ENCODE measurements at regions of chr17 and their contacts with region 1.

Region 1: DNA sequence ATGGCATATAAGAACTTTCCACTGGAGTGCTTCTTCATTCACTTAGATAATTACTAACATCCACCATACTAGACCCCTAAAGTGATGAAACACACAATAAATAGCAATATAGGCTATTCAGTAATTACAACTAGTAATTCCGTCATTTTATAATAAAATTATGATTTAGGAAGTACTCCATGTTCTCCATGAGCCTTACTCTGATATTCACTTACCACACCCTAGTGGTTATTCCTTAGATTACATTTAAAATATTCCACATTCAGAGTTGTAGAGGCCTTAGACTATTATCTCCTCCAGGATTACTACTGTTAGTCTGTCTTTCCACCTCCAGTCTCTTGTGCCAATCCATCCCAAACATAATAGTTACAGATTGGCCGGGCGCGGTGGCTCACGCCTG is 62.4 kb downstream of the STH start:
- DNase-seq: no peak
- ATAC-seq: peak; percentile 36 to 61 (median 42)
- H3K4me3 ChIP-seq: no peak overlapping the region
- H3K27ac ChIP-seq: no peak overlapping the region
- H3K4me1 ChIP-seq: peaks cover 23 to 56% (median 45%) of the 10 kb centered on the region in 3 donors
- H3K27me3 ChIP-seq: no peaks in the 10 kb centered on the region
- CTCF ChIP-seq: peak in 1 of 4 donors; percentile 36

Region 2: DNA sequence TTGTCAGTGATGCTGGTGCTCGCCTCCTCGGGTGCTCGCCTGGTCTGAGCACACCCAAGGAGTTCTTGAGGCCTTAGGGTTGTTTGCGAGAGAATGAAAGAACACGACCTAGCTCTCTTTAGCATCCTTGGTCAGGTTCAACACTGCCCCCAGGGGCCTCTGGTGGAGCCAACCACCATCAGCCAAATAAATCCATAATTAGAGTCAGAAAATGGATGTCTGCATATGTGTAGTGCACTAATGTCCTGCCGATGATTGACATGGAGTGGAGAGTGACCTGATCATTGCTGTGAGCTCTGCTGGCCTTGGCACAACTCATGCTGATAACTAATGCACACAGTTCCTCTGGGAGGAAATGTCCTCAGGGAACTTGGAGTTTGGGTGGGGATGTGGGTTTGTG is 70.5 kb before region 1 on chr17:
- intact Hi-C with region 1: no loop called
- DNase-seq: no peak
- ATAC-seq: no peak
- H3K4me3 ChIP-seq: no peak overlapping the region
- H3K27ac ChIP-seq: no peak overlapping the region
- H3K4me1 ChIP-seq: no peaks in the 10 kb centered on the region
- H3K27me3 ChIP-seq: no peaks in the 10 kb centered on the region
- CTCF ChIP-seq: no peak

Region 3: DNA sequence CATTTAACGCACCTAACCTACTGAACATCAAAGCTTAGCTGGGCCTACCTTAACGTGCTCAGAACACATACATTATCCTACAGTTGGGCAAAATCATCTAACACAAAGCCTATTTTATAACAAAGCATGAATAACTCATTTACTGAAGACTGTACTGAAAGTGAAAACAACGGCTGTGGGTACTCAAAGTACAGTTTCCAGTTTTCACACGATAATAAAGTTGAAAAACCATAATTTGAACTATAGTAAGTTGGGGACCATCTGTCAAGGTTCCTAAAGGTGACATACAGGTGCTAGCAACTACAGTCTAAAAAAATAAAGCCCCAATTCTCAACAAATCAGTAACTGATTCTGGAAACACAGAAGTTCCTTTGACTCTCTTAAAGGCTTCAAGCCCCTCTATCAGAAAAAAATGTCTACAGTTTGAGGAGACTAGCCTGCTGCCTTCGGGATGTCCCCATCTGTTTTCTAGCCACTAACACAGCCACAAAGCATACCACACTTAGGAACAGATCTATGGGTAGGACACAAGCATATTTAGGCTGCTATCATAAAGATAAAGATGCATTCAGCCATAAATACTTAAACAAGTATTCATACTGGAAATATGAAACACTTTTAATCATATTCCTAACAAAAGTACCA is 60.5 kb after region 1 on chr17:
- intact Hi-C with region 1: loop called in 1 of 3 experiments (anchors 10 kb)
- DNase-seq: no peak
- ATAC-seq: no peak
- H3K4me3 ChIP-seq: no peak overlapping the region
- H3K27ac ChIP-seq: no peak overlapping the region
- H3K4me1 ChIP-seq: peaks cover 21 to 74% (median 61%) of the 10 kb centered on the region in 3 donors
- H3K27me3 ChIP-seq: no peaks in the 10 kb centered on the region
- CTCF ChIP-seq: no peak

Region 4: GRCh38 chr17:46159686-46160085 is 98.3 kb after region 1 on chr17:
- intact Hi-C with region 1: loop called in 1 of 3 experiments (anchors 10 kb)
- DNase-seq: no peak
- ATAC-seq: peak in 1 of 4 donors; percentile 27
- H3K4me3 ChIP-seq: no peak overlapping the region
- H3K27ac ChIP-seq: no peak overlapping the region
- H3K4me1 ChIP-seq: peaks cover 29 to 63% (median 63%) of the 10 kb centered on the region in 3 donors
- H3K27me3 ChIP-seq: no peaks in the 10 kb centered on the region
- CTCF ChIP-seq: no peak

Region 5: DNA sequence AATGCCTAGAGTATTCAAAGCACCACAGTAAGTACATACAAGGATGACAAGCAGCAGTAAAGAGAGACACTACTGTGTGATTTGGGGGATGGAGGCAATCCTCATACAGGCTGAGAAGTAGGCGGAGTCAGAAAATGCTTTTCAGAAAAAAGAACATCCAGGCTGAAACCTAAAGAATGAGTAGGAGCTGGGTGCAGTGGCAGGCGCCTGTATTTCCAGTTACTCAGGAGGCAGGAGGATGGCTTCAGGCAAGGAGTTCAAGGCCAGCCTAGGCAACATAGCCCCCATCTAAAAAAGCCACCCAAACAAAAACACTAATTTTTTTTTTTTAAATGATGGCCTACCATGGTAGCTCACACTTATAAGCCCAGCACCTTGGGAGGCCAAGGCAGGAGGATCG is 121.5 kb after region 1 on chr17:
- intact Hi-C with region 1: loop called in 1 of 3 experiments (anchors 10 kb)
- DNase-seq: no peak
- ATAC-seq: no peak
- H3K4me3 ChIP-seq: no peak overlapping the region
- H3K27ac ChIP-seq: no peak overlapping the region
- H3K4me1 ChIP-seq: peaks cover 45 to 56% (median 49%) of the 10 kb centered on the region in 3 donors
- H3K27me3 ChIP-seq: no peaks in the 10 kb centered on the region
- CTCF ChIP-seq: no peak

Measured in pancreas (tissue), 10 donors.